Motor neuron (in vitro differentiated cells): ENCODE measurements at regions of chr6 and their contacts with region 1.

Region 1: DNA sequence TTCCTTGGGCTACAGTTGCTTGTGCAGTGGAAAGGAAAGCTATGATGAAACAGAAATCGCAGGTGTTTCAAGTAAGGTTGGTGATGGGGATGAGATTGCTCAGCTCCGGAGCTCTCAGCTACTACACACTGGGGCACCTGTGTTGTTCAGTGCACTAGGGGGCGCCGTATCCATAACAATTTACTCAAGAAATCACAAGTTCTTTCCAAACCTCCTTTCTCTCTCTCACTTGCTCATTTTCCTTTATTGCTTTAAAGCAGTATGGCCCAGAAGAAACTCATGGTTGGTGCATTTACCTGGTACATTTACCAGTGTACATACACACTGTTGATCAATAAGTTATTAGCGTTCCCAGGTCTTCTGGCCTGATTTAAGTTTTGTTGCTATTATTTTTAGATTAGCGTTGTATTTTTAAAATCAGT is 235.2 kb upstream of the TAB2 start:
- ATAC-seq: peak; percentile 15 to 86 (median 71)
- H3K4me3 ChIP-seq: no peak overlapping the region
- H3K27ac ChIP-seq: no peak overlapping the region
- H3K4me1 ChIP-seq: peaks cover 4% of the 10 kb centered on the region in 2 donors

Region 2: GRCh38 chr6:148866657-148867268 is 215.5 kb before region 1 on chr6:
- in situ Hi-C with region 1: no loop called
- ATAC-seq: no peak
- H3K4me3 ChIP-seq: no peak overlapping the region
- H3K27ac ChIP-seq: no peak overlapping the region
- H3K4me1 ChIP-seq: peaks cover 44 to 47% of the 10 kb centered on the region in 2 donors

Region 3: GRCh38 chr6:149316798-149317655 is 234.7 kb after region 1 on chr6:
- in situ Hi-C with region 1: loop called in 1 of 9 experiments (anchors 25 kb)
- ATAC-seq: peak; percentile 81 to 90 (median 86)
- H3K4me3 ChIP-seq: peak overlapping the region; percentile 78 to 97 (median 85)
- H3K27ac ChIP-seq: peak overlapping the region; percentile 94 to 95
- H3K4me1 ChIP-seq: peaks cover 9 to 10% of the 10 kb centered on the region in 2 donors

Region 4: GRCh38 chr6:149431905-149432775 is 349.8 kb after region 1 on chr6:
- in situ Hi-C with region 1: loop called in 6 of 9 experiments (anchors 10 to 25 kb)
- ATAC-seq: peak; percentile 98 to 99 (median 99)
- H3K4me3 ChIP-seq: no peak overlapping the region
- H3K27ac ChIP-seq: no peak overlapping the region
- H3K4me1 ChIP-seq: peaks cover 0 to 2% of the 10 kb centered on the region in 2 donors